Activated T-helper 2 cell treated with anti-CD3 and anti-CD28 coated beads, Interferon-gamma antibody, Interleukin-2, Interleukin-4, amounts not matched to agents 10 μg/mL and 5 μg/mL and 100 μg/mL, durations not matched to agents 14 hours and 24 hours and 36 hours (primary cell): ENCODE measurements at regions of chr2 and their contacts with region 1.

Region 1: GRCh38 chr2:181281206-181281832 is 175.9 kb upstream of the ITGA4 start:
- DNase-seq: no peak
- H3K4me3 Mint-ChIP-seq: peak overlapping the region; percentile 6
- H3K27ac Mint-ChIP-seq: peak overlapping the region; percentile 58
- H3K4me1 Mint-ChIP-seq: peaks cover 37% of the 10 kb centered on the region
- H3K27me3 Mint-ChIP-seq: no peaks in the 10 kb centered on the region

Region 2: DNA sequence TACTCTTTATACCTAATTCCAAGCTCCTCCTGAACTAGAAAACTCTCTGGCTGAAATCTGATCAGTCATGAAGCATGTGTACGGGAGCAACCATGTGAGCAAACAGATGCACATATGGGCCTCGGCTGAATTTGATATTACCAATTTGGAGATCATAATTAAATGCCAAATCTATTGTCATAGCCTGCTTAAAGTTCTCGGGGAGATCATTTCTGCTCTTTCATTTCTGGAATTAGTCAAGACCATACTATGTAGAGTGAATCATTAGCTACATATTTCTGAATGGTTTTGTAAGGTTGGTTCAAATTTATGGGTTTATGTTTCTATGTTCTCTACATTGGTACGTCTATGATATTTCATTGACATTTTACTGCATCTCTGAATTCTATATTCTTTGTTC is 95.4 kb before region 1 on chr2:
- intact Hi-C with region 1: loop called (anchors 5 kb)
- DNase-seq: no peak
- H3K4me3 Mint-ChIP-seq: no peak overlapping the region
- H3K27ac Mint-ChIP-seq: peak overlapping the region; percentile 48
- H3K4me1 Mint-ChIP-seq: peaks cover 26% of the 10 kb centered on the region
- H3K27me3 Mint-ChIP-seq: no peaks in the 10 kb centered on the region

Region 3: GRCh38 chr2:181239201-181239799 is 42.0 kb before region 1 on chr2:
- intact Hi-C with region 1: no loop called
- DNase-seq: no peak
- H3K4me3 Mint-ChIP-seq: no peak overlapping the region
- H3K27ac Mint-ChIP-seq: no peak overlapping the region
- H3K4me1 Mint-ChIP-seq: peaks cover 76% of the 10 kb centered on the region
- H3K27me3 Mint-ChIP-seq: no peaks in the 10 kb centered on the region

Region 4: GRCh38 chr2:181305301-181306123 is 24.2 kb after region 1 on chr2:
- intact Hi-C with region 1: loop called (anchors 2 kb)
- DNase-seq: peak; percentile 70
- H3K4me3 Mint-ChIP-seq: peak overlapping the region; percentile 70
- H3K27ac Mint-ChIP-seq: peak overlapping the region; percentile 93
- H3K4me1 Mint-ChIP-seq: peaks cover 74% of the 10 kb centered on the region
- H3K27me3 Mint-ChIP-seq: no peaks in the 10 kb centered on the region